K562 (cell line): ENCODE measurements at regions of chr5 and their contacts with region 1.

Region 1: GRCh38 chr5:43140286-43140685 is 19.6 kb downstream of the ZNF131 start:
- DNase-seq: no peak
- ATAC-seq: no peak
- H3K4me3 ChIP-seq: no peak overlapping the region
- H3K27ac ChIP-seq: no peak overlapping the region
- H3K4me1 ChIP-seq: no peaks in the 10 kb centered on the region
- H3K27me3 ChIP-seq: no peaks in the 10 kb centered on the region
- CTCF ChIP-seq: no peak
- EP300 ChIP-seq: no peak
- POLR2A ChIP-seq: no peak
- RAD21 ChIP-seq: no peak

Region 2: DNA sequence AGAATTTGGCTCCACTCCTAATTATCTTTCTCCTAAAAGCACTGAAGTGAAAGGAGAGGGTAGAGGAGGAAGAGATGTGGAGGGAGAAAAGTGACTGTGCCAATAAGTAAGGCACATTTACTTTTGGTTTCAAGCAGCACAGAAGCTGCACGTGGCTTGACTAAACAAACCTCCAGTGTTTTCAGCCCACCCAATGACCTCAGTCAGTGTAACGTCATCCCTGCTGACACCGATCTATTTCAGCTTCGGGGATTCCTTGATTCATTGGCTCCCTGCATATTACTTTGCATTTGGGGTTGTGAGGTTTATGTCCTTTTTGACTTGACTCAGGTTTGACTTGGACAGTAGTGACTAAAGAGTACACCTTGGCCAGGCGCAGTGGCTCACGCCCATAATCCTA is 16.1 kb after region 1 on chr5:
- CTCF ChIA-PET with region 1: no interaction called
- POLR2A ChIA-PET with region 1: interaction called, 10 read pairs
- in situ Hi-C with region 1: no loop called
- intact Hi-C with region 1: no loop called
- DNase-seq: no peak
- ATAC-seq: no peak; the same call in 2 of the 3 replicates
- H3K4me3 ChIP-seq: no peak overlapping the region
- H3K27ac ChIP-seq: no peak overlapping the region
- H3K4me1 ChIP-seq: peaks cover 0 to 13% of the 10 kb centered on the region in 2 experiments; a peak in 2 of 5 replicates
- H3K27me3 ChIP-seq: no peaks in the 10 kb centered on the region
- CTCF ChIP-seq: no peak
- EP300 ChIP-seq: no peak
- POLR2A ChIP-seq: no peak
- RAD21 ChIP-seq: no peak